ENCODE measurements at regions of chr19 and their contacts with region 1.

Region 1: GRCh38 chr19:3324321-3324856 is 42.0 kb upstream of the NFIC start:
- DNase-seq: peak; percentile 48
- H3K4me3 ChIP-seq: no peak overlapping the region
- H3K27ac ChIP-seq: no peak overlapping the region
- H3K4me1 ChIP-seq: no peaks in the 10 kb centered on the region
- CTCF ChIP-seq: peak; percentile 86

Region 2: GRCh38 chr19:3275583-3276340 is 48.6 kb before region 1 on chr19:
- CTCF ChIA-PET with region 1: no interaction called
- POLR2A ChIA-PET with region 1: no interaction called
- intact Hi-C with region 1: no loop called
- DNase-seq: peak; percentile 95
- H3K4me3 ChIP-seq: peak overlapping the region; percentile 70
- H3K27ac ChIP-seq: peak overlapping the region; percentile 58
- H3K4me1 ChIP-seq: peaks cover 19% of the 10 kb centered on the region
- CTCF ChIP-seq: peak; percentile 74

Region 3: DNA sequence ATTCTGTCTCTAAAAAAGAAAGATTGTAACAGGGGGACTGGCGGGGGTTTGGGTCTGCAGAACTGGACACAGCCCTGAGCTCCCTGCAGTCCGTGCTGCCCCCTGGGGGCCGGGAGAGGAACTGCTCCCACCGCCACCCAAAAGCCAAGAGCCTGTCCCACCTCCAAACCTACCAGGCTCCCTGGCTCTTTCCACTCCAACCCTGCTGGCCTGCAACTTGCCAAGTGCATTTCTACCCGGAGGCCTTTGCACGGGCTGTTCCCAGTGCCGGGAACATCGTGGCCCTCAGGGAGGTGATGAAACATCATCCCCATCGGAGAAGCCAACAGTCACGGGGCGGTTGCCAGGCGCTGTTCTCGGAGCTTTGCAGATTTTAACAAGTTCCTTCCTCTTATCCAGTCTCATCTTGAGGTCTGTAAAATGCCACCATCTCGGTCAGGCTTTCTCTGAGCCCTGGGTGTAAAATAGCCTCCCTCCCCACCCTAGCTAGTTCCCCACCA is 105.2 kb after region 1 on chr19:
- CTCF ChIA-PET with region 1: no interaction called
- POLR2A ChIA-PET with region 1: no interaction called
- intact Hi-C with region 1: loop called (anchors 1 kb)
- DNase-seq: peak; percentile 61
- H3K4me3 ChIP-seq: no peak overlapping the region
- H3K27ac ChIP-seq: no peak overlapping the region
- H3K4me1 ChIP-seq: peaks cover 6% of the 10 kb centered on the region
- CTCF ChIP-seq: peak; percentile 89

Region 4: GRCh38 chr19:3440082-3440481 is 115.7 kb after region 1 on chr19:
- CTCF ChIA-PET with region 1: no interaction called
- POLR2A ChIA-PET with region 1: no interaction called
- intact Hi-C with region 1: loop called (anchors 5 kb)
- DNase-seq: peak; percentile 50
- H3K4me3 ChIP-seq: no peak overlapping the region
- H3K27ac ChIP-seq: no peak overlapping the region
- H3K4me1 ChIP-seq: no peaks in the 10 kb centered on the region
- CTCF ChIP-seq: peak; percentile 73

Region 5: DNA sequence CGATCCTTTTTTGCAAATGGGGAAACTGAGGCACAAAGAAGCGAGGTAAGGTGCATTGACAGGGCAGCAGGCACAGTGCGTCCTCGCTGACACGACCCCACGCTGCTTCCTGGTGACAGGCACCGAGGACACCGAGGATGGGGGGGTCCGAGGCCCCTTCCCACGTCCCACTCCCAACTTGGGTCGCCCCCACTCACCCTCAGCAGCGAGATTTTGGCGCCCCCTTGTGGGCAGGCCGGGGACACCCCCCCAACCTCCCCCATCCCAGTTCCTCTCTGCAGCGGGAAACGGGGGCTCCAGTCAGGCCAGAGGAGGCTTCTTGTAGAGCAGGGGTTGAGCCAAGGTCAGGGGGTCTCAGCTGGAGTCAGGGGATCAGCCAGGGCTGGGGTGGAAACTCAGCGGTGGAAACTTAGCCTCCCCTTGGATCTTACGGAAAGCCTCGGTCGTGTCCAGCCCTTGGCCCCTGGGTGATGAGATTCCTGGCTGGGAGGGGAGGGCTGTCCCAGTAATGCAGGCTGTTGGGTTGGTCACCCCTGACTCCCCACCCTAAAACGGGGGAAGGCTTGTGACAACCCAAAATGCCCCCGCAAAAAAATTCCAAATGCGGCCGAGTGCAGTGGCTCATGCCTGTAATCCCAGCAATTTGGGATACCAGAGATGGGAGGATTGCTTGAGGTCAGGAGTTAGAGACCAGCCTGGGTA is 147.7 kb after region 1 on chr19:
- CTCF ChIA-PET with region 1: no interaction called
- POLR2A ChIA-PET with region 1: no interaction called
- intact Hi-C with region 1: loop called (anchors 2 kb)
- DNase-seq: peak; percentile 39
- H3K4me3 ChIP-seq: no peak overlapping the region
- H3K27ac ChIP-seq: no peak overlapping the region
- H3K4me1 ChIP-seq: no peaks in the 10 kb centered on the region
- CTCF ChIP-seq: peak; percentile 89